Psoas muscle (tissue), 8 donors: ENCODE measurements at regions of chr18 and their contacts with region 1.

Region 1: GRCh38 chr18:35343936-35344735 is at the start of gene ZNF24:
- DNase-seq: peak; percentile 97 to 98
- ATAC-seq: peak; percentile 96 to 97 (median 96)
- H3K4me3 ChIP-seq: peak within 1 kb of the TSS; percentile 90
- H3K27ac ChIP-seq: peak within 1 kb of the TSS; percentile 99
- H3K4me1 ChIP-seq: peaks cover 33% of the 10 kb centered on the region
- H3K27me3 ChIP-seq: no peaks in the 10 kb centered on the region
- CTCF ChIP-seq: no peak
- total RNA-seq, gene ZNF24: 40.6 to 63.8 (median 53.9) TPM

Region 2: GRCh38 chr18:35005963-35006577 is 338.1 kb before region 1 on chr18:
- intact Hi-C with region 1: loop called in 1 of 2 experiments (anchors 10 kb)
- DNase-seq: no peak
- ATAC-seq: peak; percentile 72 to 94 (median 85)
- H3K4me3 ChIP-seq: no peak overlapping the region
- H3K27ac ChIP-seq: no peak overlapping the region
- H3K4me1 ChIP-seq: peaks cover 13% of the 10 kb centered on the region
- H3K27me3 ChIP-seq: no peaks in the 10 kb centered on the region
- CTCF ChIP-seq: peak; percentile 70

Region 3: DNA sequence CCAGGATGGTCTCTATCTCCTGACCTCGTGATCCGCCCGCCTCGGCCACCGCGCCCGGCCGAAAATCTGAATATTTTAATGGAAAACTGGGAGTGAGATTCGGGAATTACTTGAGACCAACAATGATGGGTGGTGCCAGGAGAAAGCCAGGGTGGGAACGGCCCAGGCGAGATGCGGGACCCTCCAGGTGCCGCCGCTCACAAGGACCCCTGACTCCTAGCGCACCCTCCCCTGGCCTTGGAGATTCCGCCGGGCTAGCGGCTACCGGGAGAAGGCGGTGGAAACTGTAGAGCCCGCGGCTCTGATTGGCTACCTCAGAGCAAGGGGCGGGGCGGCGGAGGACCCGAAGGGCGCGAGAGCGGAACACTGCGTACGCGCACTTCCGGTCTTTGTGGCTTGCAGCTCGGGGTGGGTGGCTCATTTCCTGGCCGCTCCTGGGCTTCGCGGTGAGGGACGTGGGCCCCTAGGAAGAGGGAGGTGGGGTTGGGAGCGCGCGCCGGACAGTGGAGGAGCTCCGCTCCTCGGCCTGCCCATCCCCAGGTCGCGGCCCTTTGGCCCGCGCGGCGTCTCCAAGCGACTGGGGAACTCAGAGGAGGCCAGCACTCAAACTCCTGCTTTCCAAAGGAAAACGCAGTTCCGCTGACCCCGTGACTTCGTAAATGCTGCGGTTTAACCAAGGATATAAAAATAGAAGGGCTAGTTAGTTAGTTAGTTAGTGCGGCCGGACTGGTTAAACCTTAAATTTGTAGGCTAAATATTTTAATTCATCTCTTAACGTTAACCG is 103.3 kb before region 1 on chr18 and contains the start of gene ZNF397:
- intact Hi-C with region 1: loop called in 1 of 2 experiments (anchors 2 kb)
- DNase-seq: peak; percentile 99
- ATAC-seq: peak; percentile 100
- H3K4me3 ChIP-seq: peak within 1 kb of the TSS; percentile 90
- H3K27ac ChIP-seq: peak within 1 kb of the TSS; percentile 99
- H3K4me1 ChIP-seq: peaks cover 12% of the 10 kb centered on the region
- H3K27me3 ChIP-seq: no peaks in the 10 kb centered on the region
- CTCF ChIP-seq: no peak
- total RNA-seq, gene ZNF397: 13.7 to 25.0 (median 18.7) TPM

Region 4: DNA sequence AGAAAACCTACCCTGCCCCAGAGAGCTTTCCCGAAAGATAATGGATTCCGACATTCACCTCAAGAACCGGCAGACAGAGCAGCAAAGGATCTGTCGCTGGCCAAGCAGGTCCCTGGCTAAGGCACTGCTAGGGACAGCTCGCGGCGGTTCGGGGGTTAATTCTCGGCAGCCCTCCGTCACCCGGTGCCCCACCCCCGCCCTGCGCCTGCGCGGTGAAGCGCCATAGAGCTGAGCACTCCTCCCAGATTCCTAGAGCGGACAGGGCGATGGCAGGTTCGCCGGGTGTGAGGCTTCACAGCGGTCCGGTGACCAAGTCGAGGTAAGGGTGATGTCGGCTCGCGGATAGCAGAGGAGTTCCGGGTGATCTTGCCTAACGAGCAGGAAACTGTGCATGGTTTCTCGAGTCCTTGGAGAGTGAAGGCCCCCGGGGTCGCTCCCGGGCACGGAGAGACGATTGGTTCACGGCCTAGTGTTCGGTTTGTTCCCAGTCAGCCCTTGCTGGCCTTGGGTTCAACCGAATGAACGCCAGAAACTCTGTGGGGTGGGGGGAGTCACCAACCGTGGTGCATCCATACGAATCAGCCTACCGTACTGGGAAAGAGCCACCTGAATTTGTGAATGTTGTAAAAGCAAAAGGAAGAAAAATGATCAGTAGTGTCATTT is 53.9 kb before region 1 on chr18 and contains the start of gene ZSCAN30:
- intact Hi-C with region 1: loop called (anchors 2 to 5 kb)
- DNase-seq: peak; percentile 95 to 97
- ATAC-seq: peak; percentile 99 to 100 (median 100)
- H3K4me3 ChIP-seq: peak within 1 kb of the TSS; percentile 87
- H3K27ac ChIP-seq: peak within 1 kb of the TSS; percentile 80
- H3K4me1 ChIP-seq: peaks cover 12% of the 10 kb centered on the region
- H3K27me3 ChIP-seq: no peaks in the 10 kb centered on the region
- CTCF ChIP-seq: no peak
- total RNA-seq, gene ZSCAN30: 8.8 to 12.2 (median 10.4) TPM

Region 5: DNA sequence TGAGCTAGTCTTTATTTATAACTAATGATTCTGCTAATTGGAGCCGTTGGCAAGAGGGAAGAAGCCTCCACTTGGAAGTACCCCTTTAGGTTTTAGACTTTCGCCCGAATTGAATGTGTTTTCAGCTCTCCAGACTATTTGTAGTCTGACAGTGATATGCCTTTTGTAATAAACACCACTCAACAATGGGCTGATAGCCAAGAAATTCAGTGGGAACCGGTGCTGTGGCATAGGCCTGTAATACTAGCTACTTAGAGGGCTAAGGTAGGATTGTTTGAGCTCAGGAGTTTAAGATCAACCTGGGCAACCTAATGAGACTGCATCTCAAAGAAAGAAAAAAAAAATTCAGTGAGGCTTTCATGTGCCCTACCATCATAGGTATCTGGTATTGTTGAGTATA is 40.5 kb before region 1 on chr18:
- intact Hi-C with region 1: loop called in 1 of 2 experiments (anchors 5 kb)
- DNase-seq: no peak
- ATAC-seq: no peak
- H3K4me3 ChIP-seq: no peak overlapping the region
- H3K27ac ChIP-seq: no peak overlapping the region
- H3K4me1 ChIP-seq: no peaks in the 10 kb centered on the region
- H3K27me3 ChIP-seq: no peaks in the 10 kb centered on the region
- CTCF ChIP-seq: no peak